ENCODE measurements at regions of chr16 and their contacts with region 1.

Region 1: GRCh38 chr16:27401768-27402568 is at the start of gene IL21R:
- DNase-seq: peak; percentile 75 to 97 (median 92)
- ATAC-seq: peak; percentile 78
- H3K4me3 ChIP-seq: peak within 1 kb of the TSS; percentile 72 to 78
- H3K4me3 Mint-ChIP-seq: peak within 1 kb of the TSS; percentile 97
- H3K27ac ChIP-seq: peak within 1 kb of the TSS; percentile 85 to 86
- H3K27ac Mint-ChIP-seq: peak within 1 kb of the TSS; percentile 99
- H3K4me1 ChIP-seq: peaks cover 48% of the 10 kb centered on the region
- H3K4me1 Mint-ChIP-seq: peaks cover 69% of the 10 kb centered on the region
- H3K27me3 ChIP-seq: no peaks in the 10 kb centered on the region
- H3K27me3 Mint-ChIP-seq: no peaks in the 10 kb centered on the region
- CTCF ChIP-seq: no peak
- total RNA-seq, gene IL21R: 113 to 121 TPM

Region 2: GRCh38 chr16:25434064-25434463 is 1967.9 kb before region 1 on chr16:
- CTCF ChIA-PET with region 1: no interaction called
- POLR2A ChIA-PET with region 1: no interaction called
- intact Hi-C with region 1: no loop called
- DNase-seq: no peak
- ATAC-seq: no peak
- H3K4me3 ChIP-seq: no peak overlapping the region
- H3K4me3 Mint-ChIP-seq: no peak overlapping the region
- H3K27ac ChIP-seq: no peak overlapping the region
- H3K27ac Mint-ChIP-seq: no peak overlapping the region
- H3K4me1 ChIP-seq: no peaks in the 10 kb centered on the region
- H3K4me1 Mint-ChIP-seq: no peaks in the 10 kb centered on the region
- H3K27me3 ChIP-seq: no peaks in the 10 kb centered on the region
- H3K27me3 Mint-ChIP-seq: peaks cover 6% of the 10 kb centered on the region
- CTCF ChIP-seq: no peak

Region 3: GRCh38 chr16:27374804-27375425 is 27.1 kb before region 1 on chr16:
- CTCF ChIA-PET with region 1: interaction called, 10 read pairs
- POLR2A ChIA-PET with region 1: interaction called, 15 read pairs
- intact Hi-C with region 1: loop called (anchors 2 kb)
- DNase-seq: peak in 6 of 9 experiments; percentile 46 to 65 (median 58)
- ATAC-seq: peak; percentile 39
- H3K4me3 ChIP-seq: no peak overlapping the region
- H3K4me3 Mint-ChIP-seq: no peak overlapping the region
- H3K27ac ChIP-seq: no peak overlapping the region
- H3K27ac Mint-ChIP-seq: no peak overlapping the region
- H3K4me1 ChIP-seq: peaks cover 63% of the 10 kb centered on the region
- H3K4me1 Mint-ChIP-seq: peaks cover 42% of the 10 kb centered on the region
- H3K27me3 ChIP-seq: no peaks in the 10 kb centered on the region
- H3K27me3 Mint-ChIP-seq: no peaks in the 10 kb centered on the region
- CTCF ChIP-seq: peak; percentile 42

Region 4: DNA sequence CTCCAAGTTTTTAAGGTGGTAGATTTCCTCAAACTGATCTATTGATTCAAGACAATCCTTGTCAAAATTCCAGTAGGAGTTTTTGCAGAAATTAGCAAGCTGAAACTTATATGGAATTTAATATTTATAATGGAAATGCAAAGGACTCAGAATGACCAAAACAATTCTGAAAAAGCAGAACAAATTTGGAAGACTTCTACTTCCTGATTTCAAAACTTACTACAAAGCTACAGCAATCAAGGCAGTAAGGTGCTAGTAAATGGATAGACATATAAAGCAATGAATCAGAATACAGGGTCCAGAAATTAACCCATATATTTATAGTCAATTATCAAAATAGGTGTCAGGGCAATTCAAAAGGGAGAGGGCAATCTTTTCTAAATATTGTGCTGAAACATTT is 11.8 kb before region 1 on chr16:
- CTCF ChIA-PET with region 1: interaction called, 4 read pairs
- POLR2A ChIA-PET with region 1: interaction called, 20 read pairs
- intact Hi-C with region 1: no loop called
- DNase-seq: no peak
- ATAC-seq: no peak
- H3K4me3 ChIP-seq: no peak overlapping the region
- H3K4me3 Mint-ChIP-seq: no peak overlapping the region
- H3K27ac ChIP-seq: no peak overlapping the region
- H3K27ac Mint-ChIP-seq: no peak overlapping the region
- H3K4me1 ChIP-seq: no peaks in the 10 kb centered on the region
- H3K4me1 Mint-ChIP-seq: peaks cover 4% of the 10 kb centered on the region
- H3K27me3 ChIP-seq: no peaks in the 10 kb centered on the region
- H3K27me3 Mint-ChIP-seq: no peaks in the 10 kb centered on the region
- CTCF ChIP-seq: no peak

Region 5: GRCh38 chr16:27426423-27427408 is 24.7 kb after region 1 on chr16:
- CTCF ChIA-PET with region 1: interaction called, 3 read pairs
- POLR2A ChIA-PET with region 1: interaction called, 3 read pairs
- intact Hi-C with region 1: loop called (anchors 1 to 2 kb)
- DNase-seq: peak in 8 of 9 experiments; percentile 67 to 89 (median 81)
- ATAC-seq: peak; percentile 87
- H3K4me3 ChIP-seq: no peak overlapping the region
- H3K4me3 Mint-ChIP-seq: no peak overlapping the region
- H3K27ac ChIP-seq: peak overlapping the region in 1 of 2 experiments; percentile 69
- H3K27ac Mint-ChIP-seq: peak overlapping the region; percentile 69
- H3K4me1 ChIP-seq: peaks cover 22% of the 10 kb centered on the region
- H3K4me1 Mint-ChIP-seq: peaks cover 57% of the 10 kb centered on the region
- H3K27me3 ChIP-seq: no peaks in the 10 kb centered on the region
- H3K27me3 Mint-ChIP-seq: no peaks in the 10 kb centered on the region
- CTCF ChIP-seq: no peak

Region 6: GRCh38 chr16:27455700-27456099 is 53.7 kb after region 1 on chr16:
- CTCF ChIA-PET with region 1: interaction called, 9 read pairs
- POLR2A ChIA-PET with region 1: interaction called, 76 read pairs
- intact Hi-C with region 1: loop called (anchors 1 to 2 kb)
- DNase-seq: peak in 1 of 9 experiments; percentile 64
- ATAC-seq: peak; percentile 30
- H3K4me3 ChIP-seq: no peak overlapping the region
- H3K4me3 Mint-ChIP-seq: peak overlapping the region; percentile 27
- H3K27ac ChIP-seq: peak overlapping the region in 1 of 2 experiments; percentile 39
- H3K27ac Mint-ChIP-seq: peak overlapping the region; percentile 83
- H3K4me1 ChIP-seq: peaks cover 53% of the 10 kb centered on the region
- H3K4me1 Mint-ChIP-seq: peaks cover 74% of the 10 kb centered on the region
- H3K27me3 ChIP-seq: no peaks in the 10 kb centered on the region
- H3K27me3 Mint-ChIP-seq: no peaks in the 10 kb centered on the region
- CTCF ChIP-seq: no peak